ENCODE measurements at regions of chr11 and their contacts with region 1.

Region 1: GRCh38 chr11:124953753-124954589 is at the start of gene CCDC15:
- DNase-seq: peak; percentile 94 to 95
- ATAC-seq: peak; percentile 99 to 100
- H3K4me3 ChIP-seq: peak within 1 kb of the TSS; percentile 53 to 89 (median 79)
- H3K27ac ChIP-seq: peak within 1 kb of the TSS; percentile 77 to 81 (median 78)
- H3K4me1 ChIP-seq: peaks cover 6 to 8% of the 10 kb centered on the region in 2 donors
- H3K27me3 ChIP-seq: no peaks in the 10 kb centered on the region
- CTCF ChIP-seq: no peak
- POLR2A ChIP-seq: peak; percentile 48 to 58
- total RNA-seq, gene CCDC15: 0.10 to 0.16 TPM in 2 of 4 donors, not detected in the others

Region 2: GRCh38 chr11:124622531-124623451 is 331.2 kb before region 1 on chr11 and contains the start of gene TBRG1:
- in situ Hi-C with region 1: no loop called
- intact Hi-C with region 1: loop called (anchors 5 kb)
- DNase-seq: peak; percentile 80 to 83
- ATAC-seq: peak; percentile 98
- H3K4me3 ChIP-seq: peak within 1 kb of the TSS; percentile 74 to 95 (median 86)
- H3K27ac ChIP-seq: peak within 1 kb of the TSS; percentile 85 to 95 (median 93)
- H3K4me1 ChIP-seq: peaks cover 29 to 32% of the 10 kb centered on the region in 2 donors
- H3K27me3 ChIP-seq: no peaks in the 10 kb centered on the region
- CTCF ChIP-seq: peak in 1 of 5 experiments; percentile 18
- POLR2A ChIP-seq: peak; percentile 85 to 86
- total RNA-seq, gene TBRG1: 20.8 to 42.3 (median 25.6) TPM

Region 3: DNA sequence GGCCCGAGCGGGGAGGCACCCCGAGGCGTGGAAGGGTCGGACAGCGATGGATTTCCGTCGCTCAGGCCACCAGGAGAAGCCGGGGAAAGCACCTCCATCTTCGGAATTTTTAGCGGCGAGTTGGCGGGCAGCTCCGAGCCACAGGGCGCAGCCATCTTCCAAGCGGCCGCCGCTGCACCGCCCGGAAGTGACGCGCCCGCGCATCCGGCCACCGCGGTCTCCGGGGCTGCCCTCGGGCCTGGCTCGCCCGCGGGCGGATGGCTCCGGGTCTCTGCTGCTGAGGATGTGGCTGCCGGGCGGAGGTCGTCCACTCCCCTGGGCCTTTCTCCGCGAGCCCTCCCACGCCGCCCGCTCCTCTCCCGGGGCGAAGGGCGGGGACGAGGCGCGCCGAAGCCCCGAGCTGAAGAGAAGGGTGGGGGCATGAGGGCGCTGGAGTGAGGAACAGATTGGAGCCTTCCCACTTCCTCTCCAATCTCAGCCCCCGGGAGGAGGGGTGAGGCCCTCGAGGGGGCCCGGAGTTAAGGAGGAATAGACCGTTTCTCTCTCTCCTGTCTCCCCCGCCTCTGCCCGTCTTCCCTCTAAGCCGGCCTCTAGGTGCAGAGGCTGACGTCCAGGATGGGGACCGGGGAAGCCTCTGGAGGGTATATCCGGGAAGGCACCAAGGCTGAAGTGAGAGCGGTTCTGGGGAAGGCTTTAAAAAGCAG is 153.6 kb before region 1 on chr11 and contains the start of gene MSANTD2:
- in situ Hi-C with region 1: no loop called
- intact Hi-C with region 1: loop called (anchors 5 kb)
- DNase-seq: peak; percentile 55 to 60
- ATAC-seq: peak; percentile 94
- H3K4me3 ChIP-seq: peak within 1 kb of the TSS; percentile 58 to 91 (median 86)
- H3K27ac ChIP-seq: peak within 1 kb of the TSS; percentile 87 to 99 (median 94)
- H3K4me1 ChIP-seq: peaks cover 26 to 28% of the 10 kb centered on the region in 2 donors
- H3K27me3 ChIP-seq: no peaks in the 10 kb centered on the region
- CTCF ChIP-seq: no peak
- POLR2A ChIP-seq: peak; percentile 76 to 79
- total RNA-seq, gene MSANTD2: 3.3 to 5.1 (median 3.8) TPM

Region 4: DNA sequence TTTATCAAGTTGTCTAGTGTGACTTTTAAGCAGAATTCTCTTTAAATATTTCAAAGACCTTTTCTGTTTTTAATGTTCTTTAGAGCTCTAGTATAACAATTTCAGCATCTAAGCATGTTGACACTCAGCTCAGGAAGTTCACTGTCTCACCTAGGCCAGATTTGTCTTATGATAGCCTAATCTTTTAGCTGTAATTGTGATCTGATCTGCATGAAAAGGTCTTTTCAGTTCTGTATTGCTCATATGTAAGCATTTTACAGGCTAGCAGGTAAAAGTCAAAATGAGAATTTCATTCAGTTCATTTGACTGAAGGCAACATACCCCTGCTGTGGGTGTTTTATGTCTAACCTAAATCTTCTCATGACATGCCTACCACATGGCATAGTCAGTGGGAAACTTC is 62.4 kb after region 1 on chr11:
- in situ Hi-C with region 1: no loop called
- intact Hi-C with region 1: no loop called
- DNase-seq: no peak
- ATAC-seq: no peak
- H3K4me3 ChIP-seq: no peak overlapping the region
- H3K27ac ChIP-seq: no peak overlapping the region
- H3K4me1 ChIP-seq: no peaks in the 10 kb centered on the region
- H3K27me3 ChIP-seq: no peaks in the 10 kb centered on the region
- CTCF ChIP-seq: no peak
- POLR2A ChIP-seq: no peak

Region 5: DNA sequence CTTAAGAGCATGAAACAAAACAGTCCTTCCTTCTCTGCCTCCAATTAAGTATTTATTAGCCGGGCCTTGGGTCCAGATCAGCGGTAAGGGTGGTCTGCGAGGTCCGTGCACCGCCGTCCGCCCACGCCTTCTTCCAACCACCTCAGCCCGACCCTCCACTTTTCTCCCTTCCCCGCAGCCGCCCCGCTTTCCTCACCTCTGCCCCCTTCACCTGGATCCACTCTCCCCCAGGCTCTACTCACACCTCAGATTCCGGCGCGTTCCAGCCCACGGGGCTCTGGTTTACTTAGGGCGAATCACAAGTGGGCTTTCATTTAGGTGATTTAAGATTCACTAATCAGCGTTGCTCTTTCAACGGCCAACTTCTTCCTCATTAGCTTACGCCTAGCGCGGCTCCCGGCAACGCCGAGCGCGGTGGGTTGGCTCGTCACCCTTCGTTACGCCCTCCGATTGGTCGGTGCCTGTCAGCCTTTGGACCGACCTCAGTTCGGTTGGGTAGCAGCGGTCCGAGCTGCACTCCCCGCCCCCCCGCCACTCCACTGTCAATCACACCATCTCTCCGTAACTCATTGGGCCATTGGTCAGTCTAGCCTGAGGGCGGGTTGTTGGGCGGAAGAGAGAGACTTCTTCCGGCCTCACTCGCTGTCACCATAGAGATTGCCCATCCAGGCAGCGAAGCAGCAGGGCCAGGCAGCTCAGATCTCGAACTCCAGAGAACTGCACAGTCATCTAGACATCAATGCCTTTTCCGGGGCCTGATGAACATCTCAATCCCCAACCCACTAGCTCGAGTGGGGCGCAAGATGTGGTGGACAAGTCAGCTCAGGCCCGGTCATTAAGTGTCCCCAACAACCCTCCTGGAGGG is 157.6 kb after region 1 on chr11 and contains the start of gene TMEM218:
- in situ Hi-C with region 1: loop called in 2 of 4 experiments (anchors 10 kb)
- intact Hi-C with region 1: loop called (anchors 5 kb)
- DNase-seq: peak; percentile 99
- ATAC-seq: peak; percentile 98 to 99
- H3K4me3 ChIP-seq: peak within 1 kb of the TSS; percentile 86 to 97 (median 92)
- H3K27ac ChIP-seq: peak within 1 kb of the TSS; percentile 82 to 86 (median 84)
- H3K4me1 ChIP-seq: peaks cover 11 to 15% of the 10 kb centered on the region in 2 donors
- H3K27me3 ChIP-seq: peaks cover 0 to 3% (median 0%) of the 10 kb centered on the region in 3 donors
- CTCF ChIP-seq: no peak
- POLR2A ChIP-seq: no peak
- total RNA-seq, gene TMEM218: 6.3 to 11.2 (median 9.4) TPM

Region 6: GRCh38 chr11:125345421-125346178 is 391.6 kb after region 1 on chr11:
- in situ Hi-C with region 1: loop called in 1 of 4 experiments (anchors 25 kb)
- intact Hi-C with region 1: no loop called
- DNase-seq: peak; percentile 71 to 89
- ATAC-seq: peak; percentile 83 to 93
- H3K4me3 ChIP-seq: no peak overlapping the region
- H3K27ac ChIP-seq: peak overlapping the region; percentile 68 to 85 (median 72)
- H3K4me1 ChIP-seq: peaks cover 24 to 29% of the 10 kb centered on the region in 2 donors
- H3K27me3 ChIP-seq: no peaks in the 10 kb centered on the region
- CTCF ChIP-seq: peak; percentile 90 to 94 (median 91)
- POLR2A ChIP-seq: no peak

Measured in gastrocnemius medialis (tissue), 4 donors.